Gastrocnemius medialis (tissue), 4 donors: ENCODE measurements at regions of chr7 and their contacts with region 1.

Region 1: GRCh38 chr7:80699045-80699638 is 60.7 kb downstream of the CD36 start:
- DNase-seq: no peak
- ATAC-seq: peak; percentile 65 to 80
- H3K4me3 ChIP-seq: no peak overlapping the region
- H3K27ac ChIP-seq: no peak overlapping the region
- H3K4me1 ChIP-seq: no peaks in the 10 kb centered on the region
- H3K27me3 ChIP-seq: no peaks in the 10 kb centered on the region
- CTCF ChIP-seq: peak; percentile 64 to 74 (median 68)
- POLR2A ChIP-seq: no peak

Region 2: DNA sequence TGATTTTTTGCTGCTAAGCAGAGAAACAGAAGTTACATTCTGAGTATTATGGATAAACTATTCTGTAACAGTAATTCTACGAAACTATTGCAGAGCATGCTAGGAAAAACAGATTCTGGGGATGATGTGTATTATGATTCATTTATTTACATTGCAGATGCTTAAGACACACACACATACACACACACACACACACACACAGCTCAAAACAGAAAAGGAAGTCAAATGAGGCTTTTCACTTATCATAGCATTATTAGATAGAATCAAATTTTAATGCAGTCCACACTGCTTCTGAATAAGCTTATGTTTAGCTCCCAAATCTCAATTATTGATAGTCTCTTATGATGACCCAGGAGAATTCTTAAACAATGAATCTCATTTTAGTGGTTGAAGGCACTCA is 763.5 kb after region 1 on chr7:
- in situ Hi-C with region 1: loop called in 2 of 4 experiments (anchors 5 to 10 kb)
- intact Hi-C with region 1: no loop called
- DNase-seq: no peak
- ATAC-seq: no peak
- H3K4me3 ChIP-seq: no peak overlapping the region
- H3K27ac ChIP-seq: no peak overlapping the region
- H3K4me1 ChIP-seq: no peaks in the 10 kb centered on the region
- H3K27me3 ChIP-seq: no peaks in the 10 kb centered on the region
- CTCF ChIP-seq: no peak
- POLR2A ChIP-seq: no peak